HCT116 (cell line): ENCODE measurements at regions of chr4 and their contacts with region 1.

Region 1: GRCh38 chr4:70687821-70688794 is at the start of gene UTP3:
- DNase-seq: peak; percentile 99
- ATAC-seq: peak; percentile 95
- H3K4me3 ChIP-seq: peak within 1 kb of the TSS; percentile 98 to 99
- H3K27ac ChIP-seq: peak within 1 kb of the TSS; percentile 86
- H3K4me1 ChIP-seq: peaks cover 11 to 16% of the 10 kb centered on the region in 2 experiments
- H3K27me3 ChIP-seq: no peaks in the 10 kb centered on the region
- CTCF ChIP-seq: peak; percentile 75 to 96 (median 95)
- POLR2A ChIP-seq: peak; percentile 80
- RAD21 ChIP-seq: peak; percentile 65
- total RNA-seq, gene UTP3: 33.7 TPM

Region 2: GRCh38 chr4:70632028-70632427 is 56.1 kb before region 1 on chr4:
- CTCF ChIA-PET with region 1: no interaction called
- POLR2A ChIA-PET with region 1: no interaction called
- RAD21 ChIA-PET with region 1: no interaction called
- intact Hi-C with region 1: loop called (anchors 2 kb)
- DNase-seq: peak; percentile 41
- ATAC-seq: peak; percentile 44; the same call in 1 of the 2 replicates
- H3K4me3 ChIP-seq: peak overlapping the region; percentile 10 to 17
- H3K27ac ChIP-seq: peak overlapping the region; percentile 17; the same call in 1 of the 2 replicates
- H3K4me1 ChIP-seq: peaks cover 12 to 21% of the 10 kb centered on the region in 2 experiments
- H3K27me3 ChIP-seq: no peaks in the 10 kb centered on the region
- CTCF ChIP-seq: no peak
- POLR2A ChIP-seq: no peak
- RAD21 ChIP-seq: no peak

Region 3: DNA sequence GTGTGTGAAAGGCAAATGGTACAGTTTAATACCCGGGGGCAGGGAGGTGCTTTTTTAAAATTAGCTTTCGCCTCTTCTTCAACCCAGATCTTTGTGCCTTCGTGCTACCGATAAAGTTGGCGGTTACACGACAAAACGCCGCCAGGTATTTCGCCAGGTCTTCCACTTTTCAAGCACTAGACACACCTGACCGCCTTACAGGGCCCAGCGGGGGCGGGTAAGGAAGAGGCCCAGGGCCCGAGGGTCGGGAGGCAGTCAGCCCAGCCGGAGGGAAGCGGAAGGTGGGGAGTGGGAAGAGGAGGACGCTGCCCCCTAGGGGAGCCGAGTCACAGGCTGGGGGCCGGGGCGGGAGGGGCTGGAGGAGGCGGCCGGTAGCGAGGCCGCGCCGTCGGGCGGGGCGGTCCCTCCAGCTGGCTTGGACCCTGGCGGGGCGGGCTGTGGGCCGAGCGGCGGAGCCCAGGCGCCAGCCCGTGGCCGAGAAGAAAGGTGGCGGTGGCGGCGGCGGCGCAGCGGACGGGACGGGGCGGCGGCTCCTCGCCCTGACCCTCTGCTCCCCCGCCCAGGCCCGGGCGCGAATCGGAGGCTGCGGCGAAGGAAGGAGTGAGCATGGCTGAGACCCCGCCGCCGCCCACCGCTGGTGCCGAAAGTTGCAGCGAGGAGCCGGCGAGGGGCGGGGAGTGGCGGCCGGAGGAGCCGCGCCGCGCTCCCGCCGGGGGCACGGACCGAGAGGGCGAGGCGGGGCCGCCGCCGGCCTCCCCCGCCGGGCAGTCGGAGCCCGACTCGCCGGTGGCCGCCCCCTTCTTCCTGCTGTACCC is 16.4 kb after region 1 on chr4:
- CTCF ChIA-PET with region 1: no interaction called
- POLR2A ChIA-PET with region 1: interaction called, 11 read pairs
- RAD21 ChIA-PET with region 1: no interaction called
- intact Hi-C with region 1: loop called (anchors 2 kb)
- DNase-seq: peak; percentile 42
- ATAC-seq: peak; percentile 79
- H3K4me3 ChIP-seq: peak overlapping the region; percentile 64 to 70
- H3K27ac ChIP-seq: peak overlapping the region; percentile 95
- H3K4me1 ChIP-seq: peaks cover 19 to 27% of the 10 kb centered on the region in 2 experiments
- H3K27me3 ChIP-seq: no peaks in the 10 kb centered on the region
- CTCF ChIP-seq: peak in 2 of 3 experiments; percentile 37 to 44; a peak in 3 of 6 replicates
- POLR2A ChIP-seq: no peak
- RAD21 ChIP-seq: peak; percentile 23; the same call in 1 of the 2 replicates

Region 4: DNA sequence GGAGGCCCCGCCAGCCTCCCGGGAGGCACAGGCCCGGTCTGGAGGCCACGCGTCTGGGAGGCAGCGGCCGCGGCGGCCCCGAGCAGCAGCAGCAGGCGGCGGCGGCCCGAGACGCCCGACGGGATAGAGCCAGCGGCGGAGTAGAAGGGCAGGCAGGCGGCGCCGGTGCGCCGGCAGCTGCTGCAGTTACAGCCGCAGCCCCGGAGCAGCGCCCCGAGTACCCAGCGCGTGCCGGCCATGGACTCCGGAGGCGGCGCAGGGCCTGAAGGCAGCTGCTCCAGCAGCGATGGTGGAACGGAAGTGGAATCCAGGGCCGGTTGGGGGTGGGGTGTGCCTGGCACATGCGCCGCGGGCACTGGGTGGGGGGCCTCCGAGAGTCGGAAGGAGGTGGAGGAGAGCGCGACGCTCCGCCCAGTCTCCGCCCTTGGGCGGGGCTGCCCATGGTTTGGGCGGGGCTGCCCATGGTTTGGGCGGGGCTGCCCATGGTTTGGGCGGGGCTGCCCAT is 151.5 kb after region 1 on chr4 and contains the start of gene GRSF1:
- CTCF ChIA-PET with region 1: no interaction called
- POLR2A ChIA-PET with region 1: no interaction called
- RAD21 ChIA-PET with region 1: no interaction called
- intact Hi-C with region 1: loop called (anchors 5 kb)
- DNase-seq: peak; percentile 82
- ATAC-seq: peak; percentile 90
- H3K4me3 ChIP-seq: peak within 1 kb of the TSS; percentile 91 to 98
- H3K27ac ChIP-seq: peak within 1 kb of the TSS; percentile 97
- H3K4me1 ChIP-seq: peaks cover 3 to 15% of the 10 kb centered on the region in 2 experiments; a peak in 3 of 4 replicates
- H3K27me3 ChIP-seq: no peaks in the 10 kb centered on the region
- CTCF ChIP-seq: no peak
- POLR2A ChIP-seq: peak; percentile 73
- RAD21 ChIP-seq: no peak
- total RNA-seq, gene GRSF1: 131 TPM